Posterior cingulate gyrus (tissue), 11 donors: ENCODE measurements at regions of chr3 and their contacts with region 1.

Region 1: GRCh38 chr3:98013411-98014267 is 21.5 kb downstream of the GABRR3 start:
- DNase-seq: no peak

Region 2: DNA sequence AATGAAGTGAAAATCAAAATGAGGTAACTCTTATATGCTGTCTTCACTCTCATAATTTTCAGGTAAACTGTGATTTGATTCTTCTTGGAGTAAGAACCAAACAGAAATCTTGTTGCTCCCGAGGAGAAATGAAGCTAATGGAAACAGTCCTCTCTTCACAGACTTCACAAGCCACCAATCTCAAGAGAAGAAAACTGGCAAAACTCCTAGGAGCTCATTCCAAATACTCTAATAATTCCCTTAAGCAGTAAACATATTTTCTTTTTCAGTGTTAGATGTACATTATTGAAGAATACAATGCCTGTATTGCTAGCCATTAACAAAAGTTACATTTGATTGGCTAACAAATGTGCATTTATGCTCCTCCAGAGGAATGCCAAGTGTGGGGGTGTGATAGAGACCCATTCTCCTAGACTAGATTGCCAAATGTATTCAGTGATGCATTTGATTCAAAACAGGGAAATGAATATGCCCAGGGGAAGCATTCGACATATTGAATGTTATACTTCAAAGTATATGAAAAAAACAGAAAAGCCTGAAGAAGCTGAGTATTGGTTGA is 29.6 kb before region 1 on chr3:
- intact Hi-C with region 1: loop called (anchors 2 kb)
- DNase-seq: no peak